Activated CD4-positive, alpha-beta memory T cell treated with anti-CD3 and anti-CD28 coated beads for 36 hours (primary cell): ENCODE measurements at regions of chr1 and their contacts with region 1.

Region 1: GRCh38 chr1:38615680-38616079 is 243.9 kb downstream of the RRAGC start:
- DNase-seq: no peak
- H3K4me3 Mint-ChIP-seq: no peak overlapping the region
- H3K27ac Mint-ChIP-seq: no peak overlapping the region
- H3K4me1 Mint-ChIP-seq: no peaks in the 10 kb centered on the region
- H3K27me3 Mint-ChIP-seq: peaks cover 13% of the 10 kb centered on the region

Region 2: GRCh38 chr1:38818175-38818976 is 202.7 kb after region 1 on chr1:
- CTCF ChIA-PET with region 1: no interaction called
- POLR2A ChIA-PET with region 1: no interaction called
- intact Hi-C with region 1: loop called (anchors 10 kb)
- DNase-seq: peak; percentile 44
- H3K4me3 Mint-ChIP-seq: no peak overlapping the region
- H3K27ac Mint-ChIP-seq: no peak overlapping the region
- H3K4me1 Mint-ChIP-seq: peaks cover 2% of the 10 kb centered on the region
- H3K27me3 Mint-ChIP-seq: peaks cover 62% of the 10 kb centered on the region